Activated T-helper 2 cell treated with anti-CD3 and anti-CD28 coated beads, Interferon-gamma antibody, Interleukin-2, Interleukin-4, amounts not matched to agents 10 μg/mL and 5 μg/mL and 100 μg/mL, durations not matched to agents 14 hours and 24 hours and 36 hours (primary cell): ENCODE measurements at regions of chr13 and their contacts with region 1.

Region 1: DNA sequence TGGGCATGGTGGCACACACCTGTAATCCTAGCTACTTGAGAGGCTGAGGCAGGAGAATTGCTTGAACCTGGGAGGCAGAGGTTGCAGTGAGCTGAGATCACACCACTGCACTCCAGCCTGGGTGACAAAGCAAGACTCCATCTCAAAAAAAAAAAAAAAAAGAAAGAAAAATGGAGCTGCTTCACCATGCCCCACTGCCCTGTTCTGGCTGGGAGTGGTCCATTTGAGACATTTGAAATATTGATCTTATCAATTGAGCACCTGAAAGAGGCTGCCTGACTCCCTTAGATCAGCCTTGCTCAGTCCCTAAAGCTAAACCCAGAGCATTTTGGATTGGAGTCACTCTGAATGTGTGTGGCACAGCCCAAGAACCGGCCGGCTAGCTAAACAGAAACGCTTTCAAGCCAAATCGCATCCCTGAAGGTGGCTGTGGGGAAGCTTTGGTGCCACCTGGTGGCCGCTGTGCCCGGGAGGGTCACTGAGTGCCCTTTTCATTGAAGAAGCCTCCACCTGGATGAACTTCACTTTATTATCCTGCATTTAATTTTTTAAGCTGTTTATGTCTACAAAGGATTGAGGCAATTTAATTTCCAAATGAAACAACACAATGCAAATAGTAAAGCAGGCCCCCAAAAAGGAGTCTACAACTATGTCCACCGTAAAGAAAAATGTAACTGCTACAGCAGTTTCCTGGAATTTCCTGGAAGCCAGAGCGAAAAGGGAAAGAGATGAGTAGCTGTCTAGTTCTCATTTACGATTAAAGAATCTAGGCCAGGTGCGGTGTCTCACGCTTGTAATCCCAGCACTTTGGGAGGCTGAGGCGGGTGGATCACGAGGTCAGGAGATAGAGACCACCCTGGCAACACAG is 53.1 kb upstream of the SERPINE3 start:
- DNase-seq: peak; percentile 53
- H3K4me3 Mint-ChIP-seq: no peak overlapping the region
- H3K27ac Mint-ChIP-seq: no peak overlapping the region
- H3K4me1 Mint-ChIP-seq: peaks cover 5% of the 10 kb centered on the region
- H3K27me3 Mint-ChIP-seq: peaks cover 5% of the 10 kb centered on the region

Region 2: DNA sequence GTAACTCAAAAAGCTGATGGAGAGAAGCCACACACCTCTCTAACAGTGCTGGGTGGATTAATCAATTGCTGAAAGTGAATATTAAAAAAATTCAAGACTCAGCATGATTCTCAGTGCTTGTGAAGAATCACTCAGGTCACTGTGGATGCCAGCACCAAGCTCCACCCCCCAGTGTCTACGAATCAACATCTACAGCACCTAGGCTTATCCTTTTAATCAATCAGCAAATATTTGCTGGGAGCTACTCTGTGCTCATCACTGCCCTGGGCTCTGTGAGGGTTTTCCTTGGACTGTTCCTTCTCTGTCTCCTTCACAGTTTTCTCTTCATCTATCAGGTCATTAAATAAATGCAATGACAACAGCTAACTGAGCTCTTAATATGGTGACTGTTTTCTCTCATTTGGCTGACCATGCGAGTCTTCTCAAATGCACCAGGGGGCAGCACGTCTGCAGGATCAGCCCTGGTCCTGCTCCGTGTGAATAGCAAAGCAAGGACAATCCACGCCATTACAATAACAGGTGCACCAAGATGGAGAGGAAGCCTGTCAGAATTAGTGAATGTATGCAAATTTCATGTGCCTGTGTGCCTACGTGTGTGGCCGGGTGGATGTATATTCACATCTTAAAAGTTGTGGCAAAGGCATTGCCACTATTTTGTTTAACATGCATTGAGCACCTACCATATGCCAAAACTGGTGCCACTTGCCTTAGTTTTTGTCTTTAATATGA is 160.7 kb before region 1 on chr13:
- intact Hi-C with region 1: loop called (anchors 1 kb)
- DNase-seq: no peak
- H3K4me3 Mint-ChIP-seq: no peak overlapping the region
- H3K27ac Mint-ChIP-seq: no peak overlapping the region
- H3K4me1 Mint-ChIP-seq: peaks cover 25% of the 10 kb centered on the region
- H3K27me3 Mint-ChIP-seq: peaks cover 18% of the 10 kb centered on the region

Region 3: DNA sequence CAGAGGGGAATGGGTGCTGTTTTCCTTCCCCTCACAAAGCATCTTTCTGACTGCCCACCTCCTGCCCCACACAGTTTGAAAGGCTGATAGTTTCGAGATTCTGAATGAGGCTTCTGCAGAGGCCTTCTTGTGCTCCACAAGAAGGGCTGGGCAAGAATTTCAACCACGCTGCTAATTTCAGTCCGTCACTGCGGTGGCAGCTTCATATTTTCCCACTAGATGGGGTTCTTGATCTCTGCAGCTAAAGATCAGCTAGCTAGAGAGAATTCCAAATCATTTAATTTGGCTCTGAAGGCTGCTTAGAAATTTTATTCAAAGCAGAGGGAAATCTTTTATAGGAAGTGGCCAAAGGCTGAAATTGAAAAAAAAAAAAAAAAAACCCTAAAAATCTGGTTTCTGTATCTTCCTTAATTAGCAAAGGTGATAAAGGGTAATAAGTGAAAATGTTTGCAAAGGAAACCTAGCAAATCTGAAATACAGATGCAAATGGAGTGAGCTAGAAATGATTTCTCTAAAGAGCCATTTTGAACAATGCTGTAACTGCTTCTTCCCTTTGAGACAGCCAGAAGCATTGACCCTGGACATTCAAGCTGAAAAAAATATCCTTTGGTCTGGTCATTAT is 137.3 kb before region 1 on chr13:
- intact Hi-C with region 1: loop called (anchors 1 kb)
- DNase-seq: no peak
- H3K4me3 Mint-ChIP-seq: no peak overlapping the region
- H3K27ac Mint-ChIP-seq: no peak overlapping the region
- H3K4me1 Mint-ChIP-seq: peaks cover 9% of the 10 kb centered on the region
- H3K27me3 Mint-ChIP-seq: peaks cover 13% of the 10 kb centered on the region